CD4-positive, alpha-beta T cell (primary cell): ENCODE measurements at regions of chr1 and their contacts with region 1.

Region 1: GRCh38 chr1:12150456-12151200 is 16.2 kb upstream of the TNFRSF1B start:
- DNase-seq: peak in 6 of 14 experiments; percentile 25 to 84 (median 60)
- ATAC-seq: peak; percentile 84
- H3K4me3 ChIP-seq: peak overlapping the region; percentile 37
- H3K4me3 Mint-ChIP-seq: peak overlapping the region; percentile 83
- H3K27ac ChIP-seq: peak overlapping the region; percentile 58 to 87
- H3K27ac Mint-ChIP-seq: peak overlapping the region; percentile 96
- H3K4me1 ChIP-seq: peaks cover 95% of the 10 kb centered on the region
- H3K4me1 Mint-ChIP-seq: peaks cover 88% of the 10 kb centered on the region
- H3K27me3 ChIP-seq: no peaks in the 10 kb centered on the region
- H3K27me3 Mint-ChIP-seq: no peaks in the 10 kb centered on the region
- CTCF ChIP-seq: no peak

Region 2: GRCh38 chr1:11407301-11407994 is 743.2 kb before region 1 on chr1:
- CTCF ChIA-PET with region 1: no interaction called
- POLR2A ChIA-PET with region 1: no interaction called
- intact Hi-C with region 1: no loop called
- DNase-seq: peak in 4 of 14 experiments; percentile 22 to 48 (median 34)
- ATAC-seq: no peak
- H3K4me3 ChIP-seq: no peak overlapping the region
- H3K4me3 Mint-ChIP-seq: peak overlapping the region; percentile 67
- H3K27ac ChIP-seq: peak overlapping the region; percentile 18 to 46
- H3K27ac Mint-ChIP-seq: peak overlapping the region; percentile 78
- H3K4me1 ChIP-seq: peaks cover 27% of the 10 kb centered on the region
- H3K4me1 Mint-ChIP-seq: peaks cover 55% of the 10 kb centered on the region
- H3K27me3 ChIP-seq: no peaks in the 10 kb centered on the region
- H3K27me3 Mint-ChIP-seq: no peaks in the 10 kb centered on the region
- CTCF ChIP-seq: no peak

Region 3: DNA sequence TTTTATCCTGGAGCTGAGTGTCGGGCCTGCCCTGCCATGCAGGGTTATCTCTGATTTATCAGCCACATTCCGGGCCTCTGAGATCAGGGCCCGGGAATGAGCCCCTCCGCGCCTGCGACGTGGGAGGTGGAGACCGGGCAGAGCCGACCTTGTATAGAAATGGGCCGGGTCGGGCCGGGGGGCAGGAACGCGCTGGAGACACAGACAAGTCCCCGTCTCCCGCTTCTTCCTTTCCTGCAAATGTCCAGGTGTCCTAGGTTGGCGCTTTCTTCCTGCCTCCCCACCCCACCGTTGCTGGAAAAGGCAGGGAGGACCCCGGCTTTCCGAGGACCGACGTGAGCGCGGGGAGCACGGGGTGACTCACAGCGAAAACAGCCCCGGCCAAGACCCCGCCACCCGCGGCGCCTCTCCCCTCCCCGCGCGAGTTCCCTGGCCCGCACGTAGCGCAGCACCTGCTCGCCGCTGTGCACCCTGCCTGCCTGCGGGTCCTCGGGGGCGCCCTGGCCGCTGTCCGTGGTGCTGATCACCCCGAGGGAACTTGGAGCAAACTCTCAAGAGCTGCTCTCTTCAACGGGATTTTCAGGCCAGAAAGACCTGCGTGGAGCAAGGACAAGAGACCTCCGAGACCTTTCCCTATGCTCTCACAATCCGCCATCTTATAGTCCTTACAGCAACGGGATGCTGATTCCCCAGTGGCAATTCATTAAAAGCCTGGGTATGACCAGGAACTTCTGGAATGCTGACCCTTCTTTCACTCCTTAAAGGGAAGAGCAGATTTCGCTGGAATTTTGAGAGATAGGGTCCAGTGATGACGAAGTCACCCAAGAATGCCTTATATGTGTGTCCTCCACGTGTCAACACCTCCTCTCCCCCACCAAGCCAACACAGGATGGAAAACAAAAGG is 291.4 kb before region 1 on chr1:
- CTCF ChIA-PET with region 1: no interaction called
- POLR2A ChIA-PET with region 1: no interaction called
- intact Hi-C with region 1: no loop called
- DNase-seq: peak; percentile 41 to 80 (median 62)
- ATAC-seq: peak; percentile 94
- H3K4me3 ChIP-seq: no peak overlapping the region
- H3K4me3 Mint-ChIP-seq: no peak overlapping the region
- H3K27ac ChIP-seq: no peak overlapping the region
- H3K27ac Mint-ChIP-seq: no peak overlapping the region
- H3K4me1 ChIP-seq: peaks cover 4% of the 10 kb centered on the region
- H3K4me1 Mint-ChIP-seq: no peaks in the 10 kb centered on the region
- H3K27me3 ChIP-seq: peaks cover 56 to 75% of the 10 kb centered on the region in 2 experiments
- H3K27me3 Mint-ChIP-seq: peaks cover 75% of the 10 kb centered on the region
- CTCF ChIP-seq: no peak

Region 4: GRCh38 chr1:12132092-12132491 is 18.5 kb before region 1 on chr1:
- CTCF ChIA-PET with region 1: no interaction called
- POLR2A ChIA-PET with region 1: interaction called, 17 read pairs
- intact Hi-C with region 1: no loop called
- DNase-seq: peak in 1 of 14 experiments; percentile 41
- ATAC-seq: no peak
- H3K4me3 ChIP-seq: no peak overlapping the region
- H3K4me3 Mint-ChIP-seq: peak overlapping the region; percentile 38
- H3K27ac ChIP-seq: peak overlapping the region; percentile 50 to 81
- H3K27ac Mint-ChIP-seq: peak overlapping the region; percentile 84
- H3K4me1 ChIP-seq: peaks cover 62% of the 10 kb centered on the region
- H3K4me1 Mint-ChIP-seq: peaks cover 32% of the 10 kb centered on the region
- H3K27me3 ChIP-seq: no peaks in the 10 kb centered on the region
- H3K27me3 Mint-ChIP-seq: no peaks in the 10 kb centered on the region
- CTCF ChIP-seq: no peak

Region 5: DNA sequence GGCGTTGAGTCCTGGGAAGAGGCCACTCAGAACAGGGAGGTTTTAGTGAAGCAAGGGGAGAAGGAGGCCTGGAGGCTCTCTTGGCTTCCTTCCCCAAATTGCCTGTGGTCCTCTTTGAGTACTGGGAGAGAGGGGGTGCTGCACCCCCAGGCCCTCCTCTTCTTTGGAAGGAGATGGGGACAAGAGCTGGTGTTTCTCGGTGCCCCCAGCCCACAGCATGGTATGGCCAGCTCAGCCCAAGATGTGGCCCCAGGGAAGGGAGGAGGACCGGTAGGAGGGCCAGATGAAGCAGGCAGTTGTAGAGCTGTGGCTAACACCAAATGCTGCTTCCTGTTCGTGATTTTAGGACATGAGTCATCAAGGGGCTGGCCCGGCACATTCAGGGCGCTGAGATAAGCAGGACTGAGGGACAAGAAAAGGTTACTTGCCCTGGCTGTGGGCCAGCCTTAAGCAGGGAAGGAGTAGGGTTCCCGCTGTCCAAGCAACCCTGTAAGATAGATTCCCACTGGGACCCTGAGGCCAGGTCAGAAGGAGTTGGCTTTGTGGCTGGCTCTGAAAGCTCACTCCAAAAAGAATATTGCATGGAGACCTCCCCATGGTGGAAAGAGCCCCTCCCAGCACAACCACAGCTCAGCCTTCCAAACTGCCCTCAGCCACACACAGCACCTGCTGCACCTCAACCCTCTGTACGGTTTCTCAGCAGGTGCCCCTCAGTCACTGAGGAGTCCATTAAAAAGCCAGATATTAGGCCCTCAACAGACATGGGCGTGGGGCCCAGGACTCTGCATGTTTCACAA is 11.2 kb after region 1 on chr1:
- CTCF ChIA-PET with region 1: interaction called, 3 read pairs
- POLR2A ChIA-PET with region 1: interaction called, 62 read pairs
- intact Hi-C with region 1: no loop called
- DNase-seq: peak; percentile 43 to 93 (median 64)
- ATAC-seq: peak; percentile 75
- H3K4me3 ChIP-seq: no peak overlapping the region
- H3K4me3 Mint-ChIP-seq: peak overlapping the region; percentile 59
- H3K27ac ChIP-seq: peak overlapping the region; percentile 47 to 73
- H3K27ac Mint-ChIP-seq: peak overlapping the region; percentile 83
- H3K4me1 ChIP-seq: peaks cover 94% of the 10 kb centered on the region
- H3K4me1 Mint-ChIP-seq: peaks cover 69% of the 10 kb centered on the region
- H3K27me3 ChIP-seq: no peaks in the 10 kb centered on the region
- H3K27me3 Mint-ChIP-seq: no peaks in the 10 kb centered on the region
- CTCF ChIP-seq: no peak

Region 6: DNA sequence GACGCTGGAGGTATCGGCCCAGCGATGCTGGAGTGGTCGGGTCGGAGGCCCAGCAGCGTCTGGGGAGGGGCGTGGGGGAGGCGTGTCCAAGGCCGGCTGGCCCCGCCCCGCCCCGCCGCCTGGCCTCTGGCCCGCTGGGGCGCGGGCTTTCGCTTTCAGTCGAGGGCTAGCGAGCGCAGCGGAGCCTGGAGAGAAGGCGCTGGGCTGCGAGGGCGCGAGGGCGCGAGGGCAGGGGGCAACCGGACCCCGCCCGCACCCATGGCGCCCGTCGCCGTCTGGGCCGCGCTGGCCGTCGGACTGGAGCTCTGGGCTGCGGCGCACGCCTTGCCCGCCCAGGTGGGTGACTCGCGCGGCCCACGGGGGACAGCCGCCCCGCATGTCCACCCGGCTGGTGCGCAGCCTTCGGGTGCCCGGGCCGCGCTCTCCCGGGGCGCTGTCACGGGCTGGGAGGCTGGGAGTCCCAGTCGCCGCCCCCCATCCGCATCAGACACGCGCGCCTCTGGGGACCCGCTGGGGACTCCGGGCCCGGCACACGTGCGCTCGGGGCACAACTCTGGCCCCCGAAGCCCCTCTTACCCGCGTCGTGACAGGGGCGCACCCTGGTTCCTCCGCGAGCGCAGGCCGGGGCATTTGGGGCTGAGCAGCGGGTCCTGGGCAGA is 16.3 kb after region 1 on chr1 and contains the start of gene TNFRSF1B:
- CTCF ChIA-PET with region 1: interaction called, 3 read pairs
- POLR2A ChIA-PET with region 1: interaction called, 62 read pairs
- intact Hi-C with region 1: no loop called
- DNase-seq: peak in 13 of 14 experiments; percentile 37 to 85 (median 60)
- ATAC-seq: peak; percentile 50
- H3K4me3 ChIP-seq: peak within 1 kb of the TSS; percentile 94
- H3K4me3 Mint-ChIP-seq: peak within 1 kb of the TSS; percentile 99
- H3K27ac ChIP-seq: peak within 1 kb of the TSS; percentile 82 to 83
- H3K27ac Mint-ChIP-seq: peak within 1 kb of the TSS; percentile 96
- H3K4me1 ChIP-seq: peaks cover 91% of the 10 kb centered on the region
- H3K4me1 Mint-ChIP-seq: peaks cover 66% of the 10 kb centered on the region
- H3K27me3 ChIP-seq: no peaks in the 10 kb centered on the region
- H3K27me3 Mint-ChIP-seq: no peaks in the 10 kb centered on the region
- CTCF ChIP-seq: no peak
- total RNA-seq, gene TNFRSF1B: 61.9 to 62.6 TPM

Region 7: GRCh38 chr1:12177999-12178441 is 27.4 kb after region 1 on chr1:
- CTCF ChIA-PET with region 1: interaction called, 6 read pairs
- POLR2A ChIA-PET with region 1: interaction called, 46 read pairs
- intact Hi-C with region 1: no loop called
- DNase-seq: peak; percentile 77 to 99 (median 94)
- ATAC-seq: peak; percentile 70
- H3K4me3 ChIP-seq: peak overlapping the region; percentile 41
- H3K4me3 Mint-ChIP-seq: peak overlapping the region; percentile 69
- H3K27ac ChIP-seq: peak overlapping the region; percentile 83 to 85
- H3K27ac Mint-ChIP-seq: peak overlapping the region; percentile 96
- H3K4me1 ChIP-seq: peaks cover 100% of the 10 kb centered on the region
- H3K4me1 Mint-ChIP-seq: peaks cover 77% of the 10 kb centered on the region
- H3K27me3 ChIP-seq: no peaks in the 10 kb centered on the region
- H3K27me3 Mint-ChIP-seq: no peaks in the 10 kb centered on the region
- CTCF ChIP-seq: no peak

Region 8: DNA sequence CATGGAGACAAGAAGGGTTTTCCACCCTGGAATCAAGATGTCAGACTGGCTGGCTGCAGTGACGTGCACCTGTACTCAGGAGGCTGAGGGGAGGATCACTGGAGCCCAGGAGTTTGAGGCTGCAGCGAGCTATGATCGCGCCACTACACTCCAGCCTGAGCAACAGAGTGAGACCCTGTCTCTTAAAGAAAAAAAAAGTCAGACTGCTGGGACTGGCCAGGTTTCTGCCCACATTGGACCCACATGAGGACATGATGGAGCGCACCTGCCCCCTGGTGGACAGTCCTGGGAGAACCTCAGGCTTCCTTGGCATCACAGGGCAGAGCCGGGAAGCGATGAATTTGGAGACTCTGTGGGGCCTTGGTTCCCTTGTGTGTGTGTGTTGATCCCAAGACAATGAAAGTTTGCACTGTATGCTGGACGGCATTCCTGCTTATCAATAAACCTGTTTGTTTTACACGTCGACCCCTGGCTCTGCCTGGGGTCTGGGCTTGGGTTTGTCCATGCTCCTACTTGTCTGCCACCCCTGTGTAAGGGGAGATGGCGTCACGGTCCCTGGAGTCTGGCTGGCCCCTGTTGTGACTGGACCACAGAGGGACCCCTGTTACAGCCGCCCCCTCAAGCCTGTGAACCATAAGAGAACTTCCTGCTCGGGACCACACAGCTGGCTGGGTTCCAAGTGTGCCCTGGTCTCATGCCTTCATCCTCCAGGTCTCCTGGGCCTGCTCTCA is 58.3 kb after region 1 on chr1:
- CTCF ChIA-PET with region 1: no interaction called
- POLR2A ChIA-PET with region 1: interaction called, 28 read pairs
- intact Hi-C with region 1: no loop called
- DNase-seq: peak; percentile 75 to 93 (median 85)
- ATAC-seq: peak; percentile 73
- H3K4me3 ChIP-seq: no peak overlapping the region
- H3K4me3 Mint-ChIP-seq: peak overlapping the region; percentile 21
- H3K27ac ChIP-seq: peak overlapping the region; percentile 29 to 49
- H3K27ac Mint-ChIP-seq: peak overlapping the region; percentile 83
- H3K4me1 ChIP-seq: peaks cover 55% of the 10 kb centered on the region
- H3K4me1 Mint-ChIP-seq: peaks cover 56% of the 10 kb centered on the region
- H3K27me3 ChIP-seq: no peaks in the 10 kb centered on the region
- H3K27me3 Mint-ChIP-seq: no peaks in the 10 kb centered on the region
- CTCF ChIP-seq: peak; percentile 96

Region 9: DNA sequence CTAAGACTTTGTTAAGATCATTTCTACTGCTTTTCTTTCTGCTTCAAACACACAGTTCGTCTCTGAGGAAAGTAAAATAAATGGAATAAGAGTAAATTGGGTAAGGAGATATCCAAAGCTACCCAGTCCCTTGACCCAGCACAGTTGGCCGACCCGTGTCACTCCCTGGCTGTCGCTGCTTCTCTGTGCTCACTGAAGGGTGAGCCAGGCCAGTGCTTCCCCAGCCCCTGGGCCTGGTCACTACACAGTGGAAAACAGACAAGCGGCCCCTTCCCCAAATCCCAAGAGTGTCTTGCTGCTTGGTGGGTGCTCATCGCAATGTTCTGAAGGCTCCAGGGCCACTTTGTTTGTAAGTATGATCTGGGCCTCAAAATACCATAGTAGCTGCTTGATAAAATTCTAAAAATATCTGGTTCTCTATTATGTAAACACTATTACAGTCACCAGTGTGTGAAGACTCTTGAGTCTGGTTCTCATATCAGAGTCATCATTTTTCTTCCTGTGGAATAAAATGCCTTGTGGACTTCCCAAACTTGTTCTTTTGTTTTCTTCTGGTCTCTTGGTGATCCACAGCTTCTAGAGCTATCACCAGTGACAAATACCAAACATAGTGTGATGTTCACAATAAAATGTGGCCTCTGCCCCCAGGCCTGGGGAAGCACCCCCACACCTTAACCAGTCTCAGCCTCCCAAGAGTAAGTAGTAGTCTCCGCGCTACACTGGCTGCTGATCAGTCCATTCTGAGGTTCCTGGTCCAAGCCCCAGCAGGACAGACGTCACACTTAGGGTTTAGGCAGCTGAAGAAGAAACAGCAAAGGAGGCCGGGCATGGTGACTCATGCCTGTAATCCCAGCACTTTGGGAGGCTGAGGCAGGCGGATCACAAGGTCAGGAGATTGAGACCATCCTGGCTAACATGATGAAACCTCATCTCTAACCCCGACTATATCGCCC is 361.2 kb after region 1 on chr1:
- CTCF ChIA-PET with region 1: no interaction called
- POLR2A ChIA-PET with region 1: no interaction called
- intact Hi-C with region 1: no loop called
- DNase-seq: no peak
- ATAC-seq: no peak
- H3K4me3 ChIP-seq: peak overlapping the region; percentile 46
- H3K4me3 Mint-ChIP-seq: peak overlapping the region; percentile 76
- H3K27ac ChIP-seq: peak overlapping the region; percentile 53 to 89
- H3K27ac Mint-ChIP-seq: peak overlapping the region; percentile 96
- H3K4me1 ChIP-seq: peaks cover 44% of the 10 kb centered on the region
- H3K4me1 Mint-ChIP-seq: peaks cover 61% of the 10 kb centered on the region
- H3K27me3 ChIP-seq: no peaks in the 10 kb centered on the region
- H3K27me3 Mint-ChIP-seq: no peaks in the 10 kb centered on the region
- CTCF ChIP-seq: no peak